Dendritic cell treated with granulocyte-macrophage colony-stimulating factor and Interleukin-4, amounts not matched to agents 40 ng/mL and 50 ng/mL, for 4 days (primary cell): ENCODE measurements at regions of chr3 and their contacts with region 1.

Region 1: GRCh38 chr3:41893977-41894376 is 67.9 kb downstream of the ULK4 start:
- H3K4me3 Mint-ChIP-seq: no peak overlapping the region
- H3K27ac Mint-ChIP-seq: no peak overlapping the region
- H3K4me1 Mint-ChIP-seq: no peaks in the 10 kb centered on the region
- H3K27me3 Mint-ChIP-seq: no peaks in the 10 kb centered on the region

Region 2: GRCh38 chr3:41742127-41742526 is 151.8 kb before region 1 on chr3:
- intact Hi-C with region 1: no loop called
- H3K4me3 Mint-ChIP-seq: no peak overlapping the region
- H3K27ac Mint-ChIP-seq: no peak overlapping the region
- H3K4me1 Mint-ChIP-seq: no peaks in the 10 kb centered on the region
- H3K27me3 Mint-ChIP-seq: no peaks in the 10 kb centered on the region

Region 3: DNA sequence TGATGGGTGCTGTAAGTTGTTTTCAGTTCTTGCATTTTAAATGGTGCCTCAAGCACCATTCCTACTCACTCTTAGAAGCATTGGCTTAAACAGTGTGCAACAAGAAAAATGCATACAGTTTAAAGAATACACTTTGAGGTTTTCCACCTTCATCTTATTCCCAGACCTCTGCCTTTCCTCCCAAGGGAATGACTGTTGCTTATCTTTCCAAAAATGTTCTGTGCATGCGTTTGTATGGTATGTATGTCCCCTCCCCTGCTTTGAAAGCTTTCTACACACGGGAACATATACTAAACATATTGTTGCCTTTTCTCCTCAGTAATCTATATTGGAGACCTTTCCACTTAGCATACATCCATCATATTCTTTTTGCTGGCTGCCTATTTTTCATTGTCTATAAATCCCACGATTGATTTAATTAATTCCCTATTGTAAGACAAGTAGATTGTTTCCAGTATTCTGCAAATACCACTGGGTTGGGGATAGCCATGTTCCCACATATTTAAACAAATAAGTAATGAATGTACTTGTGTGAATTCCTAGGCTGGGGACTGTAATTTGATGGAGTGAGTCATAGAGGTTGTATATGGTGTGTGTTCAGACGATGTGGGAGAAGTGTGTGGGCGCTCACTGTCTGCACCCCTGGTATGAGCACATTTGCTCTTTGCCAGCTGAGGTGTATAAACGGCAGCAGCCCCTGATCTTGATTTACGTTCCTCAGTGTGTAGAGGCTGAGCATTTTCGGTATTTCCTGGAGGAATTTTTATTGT is 203.0 kb after region 1 on chr3:
- intact Hi-C with region 1: loop called (anchors 1 kb)
- H3K4me3 Mint-ChIP-seq: no peak overlapping the region
- H3K27ac Mint-ChIP-seq: no peak overlapping the region
- H3K4me1 Mint-ChIP-seq: peaks cover 61% of the 10 kb centered on the region
- H3K27me3 Mint-ChIP-seq: no peaks in the 10 kb centered on the region

Region 4: GRCh38 chr3:42190701-42191462 is 296.9 kb after region 1 on chr3:
- intact Hi-C with region 1: loop called (anchors 10 kb)
- H3K4me3 Mint-ChIP-seq: no peak overlapping the region
- H3K27ac Mint-ChIP-seq: peak overlapping the region; percentile 77
- H3K4me1 Mint-ChIP-seq: peaks cover 47% of the 10 kb centered on the region
- H3K27me3 Mint-ChIP-seq: no peaks in the 10 kb centered on the region

Region 5: GRCh38 chr3:42547401-42547945 is 653.5 kb after region 1 on chr3:
- intact Hi-C with region 1: loop called (anchors 10 kb)
- H3K4me3 Mint-ChIP-seq: no peak overlapping the region
- H3K27ac Mint-ChIP-seq: no peak overlapping the region
- H3K4me1 Mint-ChIP-seq: peaks cover 5% of the 10 kb centered on the region
- H3K27me3 Mint-ChIP-seq: no peaks in the 10 kb centered on the region